ENCODE measurements at regions of chr13 and their contacts with region 1.

Region 1: GRCh38 chr13:25001476-25002206 is 94.3 kb upstream of the PABPC3 start:
- DNase-seq: no peak
- H3K4me3 ChIP-seq: no peak overlapping the region
- CTCF ChIP-seq: no peak
- POLR2A ChIP-seq: no peak

Region 2: DNA sequence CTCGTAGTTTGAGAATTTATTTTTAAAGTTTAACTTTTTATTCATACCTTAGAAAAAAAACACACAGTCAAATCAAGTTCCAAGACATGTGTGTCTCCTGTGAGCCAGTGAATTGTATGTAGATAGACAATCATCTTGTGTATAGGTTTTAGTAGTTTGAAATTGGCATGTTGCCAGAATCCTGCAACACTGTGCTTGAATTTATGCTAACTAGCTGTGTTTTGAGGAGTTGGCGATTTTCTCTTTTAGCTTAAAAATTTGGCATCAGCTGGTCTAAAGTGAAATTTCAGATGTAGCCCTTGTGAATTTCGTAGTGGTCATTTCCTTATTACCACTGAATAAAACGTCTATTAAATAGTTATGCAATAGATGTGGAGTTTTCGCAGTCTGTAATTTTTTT is 583.4 kb after region 1 on chr13:
- intact Hi-C with region 1: loop called (anchors 10 kb)
- DNase-seq: no peak
- H3K4me3 ChIP-seq: no peak overlapping the region
- CTCF ChIP-seq: no peak
- POLR2A ChIP-seq: no peak

Region 3: DNA sequence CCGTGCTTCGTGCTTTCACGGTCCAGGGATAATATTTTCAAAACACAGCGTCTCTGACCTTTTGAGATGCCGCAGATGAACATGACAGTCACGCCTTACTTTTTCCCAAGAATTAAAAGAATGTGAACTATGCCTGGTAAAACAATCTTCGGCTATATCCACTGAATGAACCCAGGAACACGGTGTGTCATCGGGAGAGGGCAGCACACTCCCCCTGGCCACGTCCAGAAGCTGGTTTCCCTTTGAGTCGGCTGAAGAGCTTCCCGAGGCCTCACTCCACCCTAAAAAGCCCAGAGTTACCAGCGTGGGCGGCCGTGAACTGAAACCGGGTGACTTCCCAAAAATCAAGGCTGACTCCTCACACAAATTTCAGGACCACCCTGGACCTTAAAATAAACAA is 1073.1 kb after region 1 on chr13:
- intact Hi-C with region 1: loop called (anchors 10 kb)
- DNase-seq: no peak
- H3K4me3 ChIP-seq: no peak overlapping the region
- CTCF ChIP-seq: no peak
- POLR2A ChIP-seq: no peak

Measured in lower leg skin (tissue), 4 donors.